Left ventricle myocardium superior (tissue), 1 donor: ENCODE measurements at regions of chr9 and their contacts with region 1.

Region 1: DNA sequence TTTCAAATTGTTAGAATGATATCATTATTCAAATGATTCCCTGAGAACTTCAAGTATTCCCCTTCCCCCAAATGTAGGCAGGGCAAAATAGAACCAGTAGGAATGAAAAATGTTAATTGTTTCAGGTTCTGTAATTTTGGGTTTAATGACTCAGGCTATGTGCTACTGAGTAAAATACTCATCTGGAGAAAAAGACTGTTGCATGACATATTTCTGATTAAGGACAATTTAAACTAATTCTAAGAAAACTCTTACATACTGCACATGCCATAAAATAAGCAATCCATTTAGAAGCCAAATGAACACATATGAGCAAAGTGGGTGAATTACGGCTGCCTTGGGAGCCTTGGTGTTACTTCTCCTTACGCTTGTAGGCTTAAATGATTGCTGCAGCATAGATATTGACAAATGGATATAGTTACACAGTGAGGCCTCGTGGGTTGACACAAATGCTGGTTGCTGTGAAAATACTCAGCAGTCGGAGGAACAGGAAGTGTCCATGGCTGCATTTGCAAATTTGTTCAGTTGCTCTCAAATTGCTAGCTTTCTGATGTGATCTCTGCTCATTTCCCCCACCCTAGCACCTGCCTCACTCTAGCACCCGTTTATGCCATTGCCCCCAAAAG is 174.9 kb upstream of the DMAC1 start:
- DNase-seq: no peak
- ATAC-seq: no peak

Region 2: DNA sequence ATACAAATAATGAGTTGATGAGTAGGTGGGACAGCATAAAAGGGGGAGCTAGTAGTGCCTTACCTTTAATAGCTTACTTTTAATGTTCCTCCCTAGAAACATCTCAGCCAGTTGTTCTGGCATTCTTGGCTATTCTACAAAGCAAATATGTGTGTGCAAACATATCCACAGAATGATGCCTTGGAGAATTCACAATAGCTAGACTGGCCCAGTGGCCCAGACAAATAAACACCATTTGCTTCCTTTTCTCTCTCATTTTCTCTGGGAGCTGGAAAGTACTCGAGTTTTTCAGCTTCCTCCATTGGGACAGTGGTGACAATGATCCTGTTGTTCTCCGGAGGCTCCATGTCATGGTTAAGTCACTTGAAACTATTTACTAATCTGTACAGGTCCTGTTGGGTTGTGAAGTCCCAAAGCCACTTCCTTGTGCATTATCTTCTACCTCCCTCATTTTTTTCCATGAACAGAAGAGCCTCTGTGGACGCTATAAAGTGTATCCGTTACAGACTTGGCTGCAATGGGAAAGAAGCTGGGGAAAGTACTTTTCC is 297.8 kb before region 1 on chr9:
- intact Hi-C with region 1: loop called (anchors 5 kb)
- DNase-seq: no peak
- ATAC-seq: no peak

Region 3: DNA sequence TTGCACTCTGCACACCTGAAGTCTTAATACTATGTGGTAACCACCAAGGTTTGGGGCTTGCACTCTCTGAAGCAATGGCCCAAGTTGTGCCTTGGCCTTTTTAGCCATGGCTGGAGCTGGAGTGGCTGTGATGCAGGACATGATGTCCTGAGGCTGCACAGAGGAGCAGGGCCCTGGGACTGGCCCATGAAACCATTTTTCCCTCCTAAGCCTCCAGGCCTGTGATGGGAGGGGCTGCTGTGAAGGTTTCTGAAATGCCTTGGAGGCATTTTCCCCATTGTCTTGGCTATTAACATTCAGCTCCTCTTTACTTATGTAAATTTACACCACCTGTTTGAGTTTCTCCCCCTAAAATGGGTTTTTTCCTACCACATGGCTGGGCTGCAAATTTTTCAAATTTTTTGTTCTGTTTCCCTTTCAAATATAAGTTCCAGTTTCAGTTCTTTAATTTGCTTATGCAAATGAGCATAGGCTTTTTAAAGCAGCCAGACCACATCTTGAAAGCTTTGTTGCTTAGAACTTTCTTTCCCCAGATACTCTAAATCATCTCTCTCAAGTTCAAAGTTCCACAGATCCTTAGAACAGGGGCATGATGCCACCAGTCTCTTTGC is 62.6 kb after region 1 on chr9:
- intact Hi-C with region 1: no loop called
- DNase-seq: no peak
- ATAC-seq: no peak